ENCODE measurements at regions of chr3 and their contacts with region 1.

Region 1: DNA sequence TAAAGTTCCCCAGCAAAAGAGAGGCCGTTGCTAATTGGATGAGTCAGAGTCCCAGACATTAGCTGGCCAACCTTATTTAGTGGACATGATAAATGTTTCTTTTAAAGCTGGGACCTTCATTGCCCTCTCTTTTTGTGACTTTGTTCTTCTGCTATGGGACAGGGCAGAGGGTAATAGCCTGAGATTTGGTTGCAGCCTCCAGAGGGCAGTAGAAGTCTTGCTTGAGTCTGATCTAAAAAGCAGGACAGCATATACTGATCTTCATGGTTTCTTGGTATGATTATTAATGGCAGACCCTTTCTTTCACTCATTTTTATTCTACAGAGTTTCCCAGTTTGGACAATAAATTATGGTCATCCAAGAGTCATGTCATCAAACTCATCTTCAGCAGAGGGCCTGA is 25.1 kb upstream of the ZKSCAN7 start:
- DNase-seq: peak in 1 of 9 donors; percentile 15
- ATAC-seq: no peak
- H3K4me3 ChIP-seq: no peak overlapping the region
- H3K4me3 Mint-ChIP-seq: no peak overlapping the region
- H3K27ac ChIP-seq: no peak overlapping the region
- H3K27ac Mint-ChIP-seq: no peak overlapping the region
- H3K4me1 ChIP-seq: no peaks in the 10 kb centered on the region
- H3K4me1 Mint-ChIP-seq: peaks cover 0 to 2% (median 0%) of the 10 kb centered on the region in 7 donors
- H3K27me3 ChIP-seq: no peaks in the 10 kb centered on the region
- H3K27me3 Mint-ChIP-seq: peaks cover 9 to 30% (median 15%) of the 10 kb centered on the region in 5 donors

Region 2: DNA sequence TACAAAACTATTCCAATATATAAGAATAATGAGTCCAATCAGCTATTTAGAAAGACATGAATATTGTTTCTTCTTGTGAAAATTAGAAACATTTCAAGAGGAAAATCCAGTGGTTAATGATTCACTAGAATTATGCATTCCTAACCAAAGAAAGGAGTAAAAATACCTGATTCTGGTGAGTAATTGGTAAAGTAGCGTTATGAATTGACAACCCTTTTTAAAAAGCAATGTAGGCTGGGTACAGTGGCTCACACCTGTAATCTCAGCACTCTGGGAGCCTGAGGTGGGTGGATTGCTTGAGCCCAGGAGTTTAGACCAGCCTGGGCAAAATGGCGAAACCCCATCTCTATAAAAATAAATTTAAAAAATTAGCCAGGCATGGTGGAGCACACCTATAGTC is 245.0 kb before region 1 on chr3:
- CTCF ChIA-PET with region 1: no interaction called
- POLR2A ChIA-PET with region 1: no interaction called
- intact Hi-C with region 1: no loop called
- DNase-seq: no peak
- ATAC-seq: no peak
- H3K4me3 ChIP-seq: no peak overlapping the region
- H3K4me3 Mint-ChIP-seq: no peak overlapping the region
- H3K27ac ChIP-seq: no peak overlapping the region
- H3K27ac Mint-ChIP-seq: no peak overlapping the region
- H3K4me1 ChIP-seq: no peaks in the 10 kb centered on the region
- H3K4me1 Mint-ChIP-seq: no peaks in the 10 kb centered on the region
- H3K27me3 ChIP-seq: no peaks in the 10 kb centered on the region
- H3K27me3 Mint-ChIP-seq: peaks cover 15 to 28% (median 18%) of the 10 kb centered on the region in 5 donors

Region 3: DNA sequence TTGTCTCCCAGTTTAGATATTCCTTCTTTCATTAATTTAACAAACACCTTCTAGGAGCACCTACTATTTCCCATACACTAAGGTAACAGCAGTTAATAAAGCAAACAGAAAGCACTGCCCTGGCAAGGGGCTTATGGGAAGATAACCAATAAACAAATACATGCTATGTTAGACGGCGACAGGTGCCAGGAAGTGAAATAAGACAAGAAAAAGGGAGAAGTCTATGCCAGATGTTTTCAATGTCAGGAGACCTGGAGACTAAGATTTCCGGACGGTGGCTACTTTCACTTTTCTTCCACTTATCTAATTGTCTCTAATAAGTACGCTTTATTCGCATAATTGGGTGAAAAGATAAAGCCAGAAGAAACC is 19.9 kb before region 1 on chr3:
- CTCF ChIA-PET with region 1: interaction called, 5 read pairs
- POLR2A ChIA-PET with region 1: interaction called, 3 read pairs
- intact Hi-C with region 1: loop called in 1 of 2 experiments (anchors 1 kb)
- DNase-seq: peak in 3 of 9 donors; percentile 3 to 19 (median 12)
- ATAC-seq: peak; percentile 23
- H3K4me3 ChIP-seq: peak overlapping the region; percentile 73
- H3K4me3 Mint-ChIP-seq: peak overlapping the region; percentile 93 to 98 (median 96)
- H3K27ac ChIP-seq: peak overlapping the region; percentile 92
- H3K27ac Mint-ChIP-seq: peak overlapping the region; percentile 78 to 97 (median 93)
- H3K4me1 ChIP-seq: peaks cover 6 to 19% of the 10 kb centered on the region in 2 donors
- H3K4me1 Mint-ChIP-seq: peaks cover 30 to 52% (median 48%) of the 10 kb centered on the region in 7 donors
- H3K27me3 ChIP-seq: no peaks in the 10 kb centered on the region
- H3K27me3 Mint-ChIP-seq: no peaks in the 10 kb centered on the region

Region 4: GRCh38 chr3:44712455-44713075 is 182.6 kb after region 1 on chr3 and contains the start of gene ZNF502:
- CTCF ChIA-PET with region 1: no interaction called
- POLR2A ChIA-PET with region 1: no interaction called
- intact Hi-C with region 1: loop called in 1 of 2 experiments (anchors 5 kb)
- DNase-seq: peak; percentile 20 to 60 (median 33)
- ATAC-seq: peak; percentile 81
- H3K4me3 ChIP-seq: peak within 1 kb of the TSS; percentile 65
- H3K4me3 Mint-ChIP-seq: peak within 1 kb of the TSS; percentile 49 to 96 (median 91)
- H3K27ac ChIP-seq: peak within 1 kb of the TSS; percentile 44
- H3K27ac Mint-ChIP-seq: peak within 1 kb of the TSS; percentile 4 to 85 (median 75)
- H3K4me1 ChIP-seq: no peaks in the 10 kb centered on the region
- H3K4me1 Mint-ChIP-seq: peaks cover 4 to 25% (median 16%) of the 10 kb centered on the region in 7 donors
- H3K27me3 ChIP-seq: no peaks in the 10 kb centered on the region
- H3K27me3 Mint-ChIP-seq: peaks cover 0 to 35% (median 16%) of the 10 kb centered on the region in 5 donors
- total RNA-seq, gene ZNF502: 1.1 to 6.1 (median 4.1) TPM

Region 5: DNA sequence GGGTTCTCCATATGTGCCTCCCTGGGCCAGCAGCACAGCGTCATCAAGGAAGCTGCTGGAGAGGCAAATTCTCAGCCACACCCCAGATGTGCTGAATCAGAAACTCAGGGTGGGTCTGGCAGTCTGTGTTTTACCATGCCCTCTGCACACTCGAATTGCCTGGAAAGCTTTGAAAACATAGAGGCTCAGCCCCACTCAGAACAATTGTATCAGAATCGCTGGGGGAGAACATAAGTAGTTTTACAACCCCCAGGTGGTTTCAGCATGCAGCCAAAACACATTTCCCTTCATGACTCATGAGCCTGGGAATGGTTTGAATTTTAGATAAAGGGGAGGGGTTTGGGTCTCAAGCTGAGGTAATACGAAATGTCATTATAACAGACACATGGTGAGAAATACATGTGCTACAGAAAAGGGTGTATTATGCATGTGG is 354.1 kb after region 1 on chr3:
- CTCF ChIA-PET with region 1: no interaction called
- POLR2A ChIA-PET with region 1: no interaction called
- intact Hi-C with region 1: loop called in 1 of 2 experiments (anchors 1 kb)
- DNase-seq: no peak
- ATAC-seq: no peak
- H3K4me3 ChIP-seq: no peak overlapping the region
- H3K4me3 Mint-ChIP-seq: no peak overlapping the region
- H3K27ac ChIP-seq: no peak overlapping the region
- H3K27ac Mint-ChIP-seq: no peak overlapping the region
- H3K4me1 ChIP-seq: no peaks in the 10 kb centered on the region
- H3K4me1 Mint-ChIP-seq: no peaks in the 10 kb centered on the region
- H3K27me3 ChIP-seq: no peaks in the 10 kb centered on the region
- H3K27me3 Mint-ChIP-seq: peaks cover 0 to 20% (median 7%) of the 10 kb centered on the region in 5 donors

Region 6: DNA sequence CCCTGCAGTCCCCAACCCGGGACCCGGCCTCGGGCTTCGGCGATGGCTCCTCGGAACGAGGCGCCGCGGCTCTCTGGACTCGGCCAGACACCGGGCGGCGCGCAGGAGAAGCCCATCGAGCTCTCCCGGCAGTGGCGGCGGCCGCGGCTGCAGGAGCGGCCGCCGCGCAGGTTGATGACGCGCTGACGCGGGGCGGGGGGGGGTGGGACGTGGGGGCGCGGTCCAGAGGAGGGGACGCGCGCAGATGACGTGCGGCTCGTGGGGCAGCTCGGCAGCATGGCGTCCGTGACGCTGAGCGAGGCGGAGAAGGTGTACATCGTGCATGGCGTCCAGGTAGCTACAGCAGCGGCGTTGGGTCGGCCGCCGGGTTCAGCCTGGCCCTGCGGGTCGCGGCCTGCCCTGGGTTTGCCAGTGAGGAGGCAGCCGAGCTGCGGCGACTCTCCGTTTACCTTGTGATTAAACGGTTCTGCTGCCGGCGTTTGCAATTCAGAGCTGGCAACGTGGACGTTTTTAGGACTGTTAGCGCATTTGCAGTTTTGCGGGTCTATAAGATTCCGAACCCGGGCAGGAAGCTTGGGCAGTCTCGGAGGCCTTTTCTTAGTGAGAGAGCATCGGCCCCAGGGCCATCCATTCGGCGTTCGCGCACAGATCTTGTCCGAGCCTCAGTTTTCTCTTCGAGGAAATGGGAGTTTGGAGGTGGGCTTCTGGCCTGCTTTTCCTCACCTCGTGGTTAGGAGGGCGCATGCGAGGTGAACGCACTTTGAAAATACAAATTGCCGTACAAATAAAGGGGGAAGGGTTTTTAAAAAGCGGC is 446.3 kb after region 1 on chr3 and contains the starts of genes EXOSC7 and ZDHHC3:
- CTCF ChIA-PET with region 1: no interaction called
- POLR2A ChIA-PET with region 1: no interaction called
- intact Hi-C with region 1: loop called (anchors 5 to 10 kb)
- DNase-seq: peak; percentile 73 to 89 (median 85)
- ATAC-seq: peak; percentile 98
- H3K4me3 ChIP-seq: peak within 1 kb of the TSS; percentile 94
- H3K4me3 Mint-ChIP-seq: peak within 1 kb of the TSS; percentile 90 to 97 (median 94)
- H3K27ac ChIP-seq: peak within 1 kb of the TSS; percentile 98
- H3K27ac Mint-ChIP-seq: peak within 1 kb of the TSS; percentile 85 to 97 (median 94)
- H3K4me1 ChIP-seq: peaks cover 21 to 37% of the 10 kb centered on the region in 2 donors
- H3K4me1 Mint-ChIP-seq: peaks cover 50 to 87% (median 79%) of the 10 kb centered on the region in 7 donors
- H3K27me3 ChIP-seq: no peaks in the 10 kb centered on the region
- H3K27me3 Mint-ChIP-seq: no peaks in the 10 kb centered on the region
- total RNA-seq, gene EXOSC7: 30.7 to 57.9 (median 44.3) TPM
- total RNA-seq, gene ZDHHC3: 38.5 to 54.0 (median 48.8) TPM

Region 7: GRCh38 chr3:45656575-45657363 is 1126.8 kb after region 1 on chr3:
- CTCF ChIA-PET with region 1: no interaction called
- POLR2A ChIA-PET with region 1: no interaction called
- intact Hi-C with region 1: loop called in 1 of 2 experiments (anchors 5 kb)
- DNase-seq: peak; percentile 65 to 83 (median 78)
- ATAC-seq: peak; percentile 94
- H3K4me3 ChIP-seq: no peak overlapping the region
- H3K4me3 Mint-ChIP-seq: no peak overlapping the region
- H3K27ac ChIP-seq: no peak overlapping the region
- H3K27ac Mint-ChIP-seq: peak overlapping the region in 1 of 9 donors; percentile 30
- H3K4me1 ChIP-seq: no peaks in the 10 kb centered on the region
- H3K4me1 Mint-ChIP-seq: peaks cover 6 to 27% (median 18%) of the 10 kb centered on the region in 7 donors
- H3K27me3 ChIP-seq: no peaks in the 10 kb centered on the region
- H3K27me3 Mint-ChIP-seq: no peaks in the 10 kb centered on the region

Measured in naive thymus-derived CD4-positive, alpha-beta T cell (primary cell).